H1 (cell line): ENCODE measurements at regions of chr1 and their contacts with region 1.

Region 1: DNA sequence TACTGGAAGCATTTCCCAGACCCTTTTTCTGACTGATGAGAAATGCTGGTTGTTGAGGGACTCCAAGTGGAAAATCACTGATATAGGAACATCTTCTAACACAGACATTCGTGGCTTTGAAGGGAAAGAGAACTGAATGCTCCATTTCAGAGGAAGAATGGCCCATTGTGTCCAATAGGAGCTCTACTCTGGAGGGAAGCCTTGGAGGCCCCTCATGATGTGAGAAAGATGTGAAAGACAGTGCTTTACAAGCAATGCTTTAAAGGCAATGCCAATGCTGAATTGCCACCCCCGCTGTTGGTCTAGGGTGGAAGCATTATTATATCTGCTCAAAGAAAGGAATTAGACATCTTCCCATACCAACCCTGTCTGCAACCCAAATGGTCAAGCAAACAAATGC is 13.7 kb downstream of the NMNAT2 start:
- DNase-seq: no peak
- H3K4me3 ChIP-seq: no peak overlapping the region
- H3K27ac ChIP-seq: 0 out of 2 replicates have a peak overlapping the region, but pooled peaks have one; percentile 5
- H3K4me1 ChIP-seq: peaks cover 3 to 26% (median 24%) of the 10 kb centered on the region in 4 experiments
- H3K27me3 ChIP-seq: no peaks in the 10 kb centered on the region
- CTCF ChIP-seq: no peak
- EP300 ChIP-seq: no peak
- POLR2A ChIP-seq: no peak
- RAD21 ChIP-seq: no peak

Region 2: GRCh38 chr1:183244466-183244865 is 160.0 kb before region 1 on chr1:
- CTCF ChIA-PET with region 1: no interaction called
- POLR2A ChIA-PET with region 1: no interaction called
- DNase-seq: no peak
- H3K4me3 ChIP-seq: no peak overlapping the region
- H3K27ac ChIP-seq: no peak overlapping the region
- H3K4me1 ChIP-seq: peaks cover 0 to 3% (median 1%) of the 10 kb centered on the region in 4 experiments; a peak in 2 of 7 replicates
- H3K27me3 ChIP-seq: no peaks in the 10 kb centered on the region
- CTCF ChIP-seq: no peak
- EP300 ChIP-seq: no peak
- POLR2A ChIP-seq: no peak
- RAD21 ChIP-seq: no peak

Region 3: DNA sequence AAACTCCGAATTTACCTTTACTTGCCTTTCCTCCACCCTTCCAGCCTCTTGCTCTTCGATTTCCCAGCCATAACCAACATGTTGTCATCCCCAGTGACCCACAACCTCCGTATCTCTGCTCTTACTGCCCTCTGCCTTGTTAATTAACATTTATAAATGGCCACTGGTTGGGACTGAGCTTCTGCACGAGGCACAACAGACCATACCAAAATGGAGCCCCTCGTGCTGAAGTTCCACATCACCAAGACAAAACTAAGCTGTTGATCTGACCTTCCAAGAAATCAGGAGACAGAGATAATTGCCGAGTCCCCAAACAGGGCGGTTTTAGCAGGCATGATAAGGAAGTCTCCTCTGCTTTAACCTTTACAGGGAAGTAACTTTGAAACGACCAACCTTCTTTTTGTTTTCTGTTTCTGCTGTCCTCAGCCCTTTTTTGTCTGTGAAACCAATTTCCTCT is 58.2 kb before region 1 on chr1:
- CTCF ChIA-PET with region 1: no interaction called
- POLR2A ChIA-PET with region 1: no interaction called
- DNase-seq: no peak
- H3K4me3 ChIP-seq: no peak overlapping the region
- H3K27ac ChIP-seq: no peak overlapping the region
- H3K4me1 ChIP-seq: peaks cover 0 to 8% (median 1%) of the 10 kb centered on the region in 4 experiments; a peak in 2 of 7 replicates
- H3K27me3 ChIP-seq: no peaks in the 10 kb centered on the region
- CTCF ChIP-seq: no peak
- EP300 ChIP-seq: no peak
- POLR2A ChIP-seq: no peak
- RAD21 ChIP-seq: no peak

Region 4: DNA sequence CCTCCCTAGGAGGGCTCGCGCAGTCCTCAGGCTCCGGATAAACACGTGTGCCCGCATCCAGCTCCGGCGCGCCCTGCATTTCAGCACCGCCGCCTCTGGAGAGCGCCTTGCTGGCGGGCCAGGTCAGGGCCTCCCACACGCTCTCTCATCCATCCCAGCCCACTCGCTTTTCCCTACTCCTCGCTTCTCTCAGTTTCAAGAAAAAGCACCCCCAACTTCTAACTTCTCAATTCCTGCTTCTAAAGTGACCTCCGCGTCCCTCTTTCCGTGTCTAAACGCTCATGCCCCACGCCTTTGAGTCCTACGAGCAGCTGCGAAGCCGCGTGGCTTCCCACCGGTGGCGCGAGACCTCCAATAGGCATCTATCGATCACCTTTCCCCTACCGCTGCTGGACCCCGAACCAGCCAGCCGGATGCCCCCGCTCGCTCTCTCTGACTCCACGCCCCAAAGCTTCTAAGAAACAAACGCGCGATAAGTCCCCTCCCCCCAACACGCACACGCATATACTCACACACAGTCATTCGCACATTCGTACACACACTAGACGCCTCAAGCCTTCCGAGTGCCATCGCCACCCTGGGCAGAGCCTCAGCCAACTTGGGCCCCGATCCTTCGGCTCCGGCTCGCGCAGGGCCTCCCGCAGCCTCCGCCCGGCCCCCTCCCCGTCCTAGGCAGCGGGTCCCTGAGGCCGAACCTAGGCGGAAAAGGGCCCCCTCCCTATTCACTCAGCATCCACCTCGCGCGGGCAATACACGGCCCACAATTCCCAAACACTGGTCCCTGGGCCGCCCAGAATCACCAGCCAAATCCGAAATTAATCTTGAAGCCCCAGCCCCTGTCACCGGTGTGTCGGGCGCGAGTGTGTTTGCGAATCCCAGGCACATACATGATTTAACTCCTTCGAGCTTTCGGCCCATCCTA is 12.7 kb after region 1 on chr1:
- CTCF ChIA-PET with region 1: interaction called, 4 read pairs
- POLR2A ChIA-PET with region 1: interaction called, 17 read pairs
- DNase-seq: peak in 1 of 2 experiments; percentile 89
- H3K4me3 ChIP-seq: peak overlapping the region; percentile 54 to 87 (median 67)
- H3K27ac ChIP-seq: no peak overlapping the region
- H3K4me1 ChIP-seq: peaks cover 3 to 9% (median 7%) of the 10 kb centered on the region in 4 experiments
- H3K27me3 ChIP-seq: peaks cover 2 to 15% (median 12%) of the 10 kb centered on the region in 4 experiments; a peak in 6 of 7 replicates
- CTCF ChIP-seq: no peak
- EP300 ChIP-seq: no peak
- POLR2A ChIP-seq: no peak
- RAD21 ChIP-seq: peak; percentile 17 to 22; a peak in 2 of 4 replicates

Region 5: GRCh38 chr1:183444243-183444642 is 39.8 kb after region 1 on chr1:
- CTCF ChIA-PET with region 1: no interaction called
- POLR2A ChIA-PET with region 1: no interaction called
- DNase-seq: no peak
- H3K4me3 ChIP-seq: no peak overlapping the region
- H3K27ac ChIP-seq: no peak overlapping the region
- H3K4me1 ChIP-seq: no peaks in the 10 kb centered on the region
- H3K27me3 ChIP-seq: no peaks in the 10 kb centered on the region
- CTCF ChIP-seq: no peak
- EP300 ChIP-seq: no peak
- POLR2A ChIP-seq: no peak
- RAD21 ChIP-seq: no peak

Region 6: DNA sequence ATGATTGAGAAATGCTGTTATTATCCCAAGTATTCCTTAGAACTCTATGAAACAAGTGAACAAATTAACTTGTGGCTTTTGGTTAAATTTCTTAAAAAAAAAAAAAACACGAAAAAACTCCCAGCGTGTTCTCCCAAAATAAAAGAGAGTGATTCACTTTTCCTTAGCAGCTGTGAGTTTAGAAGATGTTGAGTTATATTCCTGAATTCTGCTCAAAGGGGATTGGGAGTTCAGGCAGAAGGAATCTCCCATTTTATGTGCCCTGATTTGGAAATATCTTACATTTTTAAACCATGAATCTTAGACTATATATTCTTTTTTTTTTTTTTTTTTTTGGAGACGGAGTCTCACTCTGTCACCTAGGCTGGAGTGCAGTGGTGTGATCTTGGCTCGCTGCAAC is 102.1 kb after region 1 on chr1:
- CTCF ChIA-PET with region 1: no interaction called
- POLR2A ChIA-PET with region 1: no interaction called
- DNase-seq: no peak
- H3K4me3 ChIP-seq: no peak overlapping the region
- H3K27ac ChIP-seq: no peak overlapping the region
- H3K4me1 ChIP-seq: peaks cover 0 to 3% (median 0%) of the 10 kb centered on the region in 4 experiments; a peak in 2 of 7 replicates
- H3K27me3 ChIP-seq: no peaks in the 10 kb centered on the region
- CTCF ChIP-seq: no peak
- EP300 ChIP-seq: no peak
- POLR2A ChIP-seq: no peak
- RAD21 ChIP-seq: no peak